ENCODE measurements at regions of chr1 and their contacts with region 1.

Region 1: DNA sequence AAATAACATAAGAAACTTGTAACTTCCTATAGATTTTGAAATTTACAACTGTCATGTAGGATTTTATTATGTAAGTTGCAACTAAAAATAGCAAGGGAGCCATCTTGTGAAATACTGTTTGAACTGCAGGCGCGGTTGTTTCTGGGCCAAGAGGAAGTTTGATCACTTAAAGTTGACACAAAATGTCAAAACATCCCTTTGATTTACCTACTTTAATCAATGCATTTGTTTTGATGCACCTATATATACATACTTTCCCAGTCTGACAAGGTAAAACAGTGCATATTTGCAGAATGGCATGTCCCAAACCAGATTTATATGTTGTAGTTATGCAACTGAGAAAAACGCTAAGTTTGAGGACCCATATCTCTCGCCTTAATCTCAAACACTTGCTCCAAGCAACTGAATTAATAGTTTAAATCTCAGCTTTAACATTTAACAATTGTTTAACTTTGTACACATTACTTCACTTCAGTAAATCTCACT is 63.8 kb downstream of the KCNK2 start:
- DNase-seq: peak in 1 of 2 experiments; percentile 35
- ATAC-seq: 0 out of 6 replicates have a peak, but pooled peaks of 1 of the 2 experiments have one; percentile 39
- H3K4me3 ChIP-seq: no peak overlapping the region
- H3K27ac ChIP-seq: no peak overlapping the region
- H3K4me1 ChIP-seq: no peaks in the 10 kb centered on the region
- CTCF ChIP-seq: peak; percentile 48; the same call in 2 of the 3 replicates
- EP300 ChIP-seq: no peak
- POLR2A ChIP-seq: no peak
- RAD21 ChIP-seq: peak; percentile 66 to 75

Region 2: GRCh38 chr1:214808845-214809460 is 337.4 kb before region 1 on chr1:
- CTCF ChIA-PET with region 1: interaction called, 13 read pairs
- POLR2A ChIA-PET with region 1: no interaction called
- DNase-seq: peak in 1 of 2 experiments; percentile 14
- ATAC-seq: peak; percentile 79 to 81
- H3K4me3 ChIP-seq: no peak overlapping the region
- H3K27ac ChIP-seq: no peak overlapping the region
- H3K4me1 ChIP-seq: no peaks in the 10 kb centered on the region
- CTCF ChIP-seq: peak; percentile 43
- EP300 ChIP-seq: 0 out of 5 replicates have a peak, but pooled peaks of 1 of the 2 experiments have one; percentile 11
- POLR2A ChIP-seq: no peak
- RAD21 ChIP-seq: peak; percentile 57 to 75

Region 3: GRCh38 chr1:214857716-214858115 is 288.7 kb before region 1 on chr1:
- CTCF ChIA-PET with region 1: no interaction called
- POLR2A ChIA-PET with region 1: no interaction called
- DNase-seq: no peak
- ATAC-seq: no peak
- H3K4me3 ChIP-seq: no peak overlapping the region
- H3K27ac ChIP-seq: no peak overlapping the region
- H3K4me1 ChIP-seq: no peaks in the 10 kb centered on the region
- CTCF ChIP-seq: no peak
- EP300 ChIP-seq: no peak
- POLR2A ChIP-seq: no peak
- RAD21 ChIP-seq: no peak